Cardiac septum (tissue), 1 donor: ENCODE measurements at regions of chr12 and their contacts with region 1.

Region 1: GRCh38 chr12:51047655-51048540 is at the start of gene LETMD1:
- DNase-seq: peak; percentile 97
- total RNA-seq, gene LETMD1: 27.3 TPM

Region 2: DNA sequence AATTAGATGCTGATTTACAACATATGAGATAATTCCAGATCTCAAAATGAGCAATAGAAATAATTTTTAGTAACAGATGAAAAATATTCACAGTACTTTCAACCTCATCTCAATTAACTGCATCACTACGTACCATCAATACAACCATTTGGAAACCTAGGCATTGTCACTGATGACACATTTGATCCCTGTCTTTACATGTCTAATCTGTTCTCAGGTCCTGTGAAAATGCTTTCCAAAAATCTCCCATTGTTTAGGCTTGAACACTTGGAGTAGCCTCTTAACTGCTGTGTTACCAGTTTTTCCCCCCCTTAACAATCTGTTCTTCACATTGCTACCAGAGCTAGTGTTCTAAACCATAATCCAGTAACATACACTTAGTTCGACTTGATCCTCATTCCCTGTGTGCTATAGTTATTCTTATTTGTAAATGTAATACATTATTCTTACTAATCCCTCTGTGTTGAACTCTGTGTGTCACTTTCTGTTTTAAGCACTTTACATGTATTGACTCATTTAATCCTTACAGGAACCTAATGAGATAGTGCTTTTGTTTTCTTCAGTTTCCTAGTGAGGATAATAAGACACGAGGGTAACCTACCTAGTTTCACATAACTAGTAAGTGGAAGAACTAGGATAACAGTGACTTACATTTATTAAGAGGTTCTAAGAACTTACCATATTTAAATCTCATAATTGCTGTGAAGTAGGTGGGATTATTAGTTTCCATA is 605.6 kb before region 1 on chr12:
- intact Hi-C with region 1: no loop called
- DNase-seq: no peak

Region 3: DNA sequence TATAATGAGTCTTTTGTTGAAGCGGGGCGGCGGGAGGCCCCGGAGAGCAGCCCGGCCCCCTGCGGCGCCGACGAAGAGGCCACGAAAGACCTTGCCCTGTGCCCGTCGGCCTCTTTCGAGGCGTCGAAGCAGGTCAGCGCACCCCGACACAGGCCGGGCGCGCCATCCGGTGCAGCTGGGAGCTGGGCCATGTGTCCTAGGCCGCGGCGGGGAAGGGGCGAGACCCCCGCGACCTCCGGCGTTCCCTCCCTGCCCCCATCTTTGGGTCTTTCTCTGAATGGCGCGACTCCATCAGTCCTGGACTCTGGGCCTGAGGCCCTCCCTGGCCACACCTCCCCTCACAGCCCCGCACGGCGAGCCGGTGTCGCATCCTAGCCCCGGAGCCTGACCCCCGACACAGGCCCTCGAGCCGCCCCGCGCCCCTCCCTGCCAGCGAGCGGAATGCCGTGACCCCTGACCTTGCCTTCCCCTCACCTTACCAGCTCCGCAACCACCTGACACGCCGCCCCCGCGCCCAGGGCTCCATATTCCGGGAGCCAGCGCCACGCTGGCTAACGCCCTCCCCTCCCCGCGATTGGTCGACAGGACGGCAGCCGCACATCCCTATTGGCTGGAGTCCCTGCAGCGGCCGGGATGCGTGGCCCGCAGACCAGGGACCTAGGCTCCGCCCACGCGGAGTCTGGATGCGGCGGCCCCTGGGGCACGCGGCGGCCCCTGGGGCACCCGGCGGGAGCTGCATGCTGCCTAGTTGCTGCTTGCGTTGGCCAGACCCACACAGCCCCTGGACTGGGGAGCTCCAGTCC is 21.9 kb before region 1 on chr12 and contains the start of gene SLC11A2:
- intact Hi-C with region 1: loop called (anchors 2 kb)
- DNase-seq: peak; percentile 98
- total RNA-seq, gene SLC11A2: 22.0 TPM

Region 4: DNA sequence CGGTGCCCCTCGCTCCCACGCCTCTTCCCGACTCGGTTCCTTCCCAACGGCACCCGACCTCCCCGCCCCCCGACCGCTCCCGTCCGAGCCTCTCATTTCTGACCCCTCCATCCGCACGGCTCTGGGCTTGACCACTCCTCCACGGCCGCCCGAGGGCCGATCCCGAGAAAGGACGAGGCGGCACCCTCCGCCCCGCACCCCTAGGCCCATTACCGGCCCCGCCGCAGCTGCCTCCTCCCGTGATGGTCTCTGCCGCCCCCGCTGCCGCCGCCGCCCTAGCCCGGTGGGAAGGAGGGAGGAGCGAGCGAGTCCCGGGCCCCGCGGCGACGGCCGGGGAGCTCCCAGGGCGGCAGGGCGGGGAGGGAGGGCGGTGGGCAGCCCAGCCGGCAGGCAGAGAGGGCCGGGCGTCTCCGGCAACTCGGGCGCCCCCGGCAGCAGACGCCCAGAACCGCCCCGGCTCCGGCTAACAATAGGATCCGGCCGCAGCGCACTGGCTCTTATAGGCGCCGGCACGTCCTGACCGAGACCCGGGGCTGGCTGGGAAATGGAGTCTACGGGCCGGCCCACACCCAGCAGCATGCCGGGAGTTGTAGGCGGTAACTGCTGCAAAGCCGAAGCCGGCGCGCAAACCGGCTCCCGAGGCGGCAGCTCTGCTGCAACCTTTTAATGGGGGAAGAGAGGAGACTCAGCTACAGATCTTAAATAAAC is 35.4 kb after region 1 on chr12 and contains the start of gene CSRNP2:
- intact Hi-C with region 1: loop called (anchors 2 kb)
- DNase-seq: peak; percentile 99
- total RNA-seq, gene CSRNP2: 30.1 TPM

Region 5: GRCh38 chr12:51341259-51342007 is 293.5 kb after region 1 on chr12:
- intact Hi-C with region 1: loop called (anchors 5 kb)
- DNase-seq: no peak